ENCODE measurements at regions of chr19 and their contacts with region 1.

Region 1: GRCh38 chr19:15629003-15629880 is 11.5 kb upstream of the CYP4F3 start:
- DNase-seq: peak; percentile 93
- ATAC-seq: peak; percentile 95
- H3K4me3 Mint-ChIP-seq: no peak overlapping the region
- H3K27ac Mint-ChIP-seq: no peak overlapping the region
- H3K4me1 Mint-ChIP-seq: peaks cover 3% of the 10 kb centered on the region
- H3K27me3 Mint-ChIP-seq: peaks cover 4% of the 10 kb centered on the region

Region 2: DNA sequence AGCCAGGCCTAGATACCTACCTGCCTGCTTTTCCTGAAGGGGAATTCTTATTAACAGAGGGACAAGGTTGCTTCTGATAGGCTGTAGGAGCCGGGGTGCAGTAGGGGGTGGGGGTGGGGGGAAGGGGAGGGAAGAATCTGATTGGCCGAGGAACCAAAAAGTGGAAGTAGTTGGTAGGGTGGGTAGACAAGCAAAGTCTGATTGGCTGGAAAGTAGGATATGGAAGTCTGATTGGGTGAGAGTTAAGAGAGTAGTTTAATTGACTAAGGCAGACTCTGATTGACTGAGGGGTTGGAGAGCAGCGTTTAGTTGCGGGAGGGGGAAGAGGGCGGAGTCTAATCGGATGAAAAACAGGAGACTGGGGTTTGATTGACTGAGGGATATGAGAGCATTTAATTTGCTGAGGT is 130.3 kb before region 1 on chr19:
- CTCF ChIA-PET with region 1: no interaction called
- POLR2A ChIA-PET with region 1: no interaction called
- intact Hi-C with region 1: no loop called
- DNase-seq: no peak
- ATAC-seq: peak; percentile 66
- H3K4me3 Mint-ChIP-seq: no peak overlapping the region
- H3K27ac Mint-ChIP-seq: no peak overlapping the region
- H3K4me1 Mint-ChIP-seq: peaks cover 14% of the 10 kb centered on the region
- H3K27me3 Mint-ChIP-seq: no peaks in the 10 kb centered on the region

Region 3: DNA sequence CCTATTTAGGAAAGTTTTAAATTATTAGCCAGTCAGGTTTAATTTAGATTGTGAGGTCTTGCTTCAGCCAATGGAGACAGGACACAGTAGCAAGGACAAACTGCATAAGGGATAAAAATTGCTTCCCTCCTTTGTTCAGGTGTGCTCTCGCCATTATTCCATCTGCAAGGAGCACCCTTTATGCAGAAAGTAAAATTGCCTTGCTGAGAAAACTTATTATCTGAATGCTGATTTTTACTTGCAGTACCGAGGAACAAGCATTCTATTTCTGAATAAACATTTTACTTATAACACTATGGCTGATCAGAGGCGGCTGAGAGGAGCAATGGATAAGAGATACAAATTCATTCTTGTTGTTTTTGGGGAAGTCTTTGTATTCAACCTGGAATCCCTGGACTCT is 112.9 kb before region 1 on chr19:
- CTCF ChIA-PET with region 1: no interaction called
- POLR2A ChIA-PET with region 1: no interaction called
- intact Hi-C with region 1: no loop called
- DNase-seq: no peak
- ATAC-seq: no peak
- H3K4me3 Mint-ChIP-seq: no peak overlapping the region
- H3K27ac Mint-ChIP-seq: peak overlapping the region; percentile 55
- H3K4me1 Mint-ChIP-seq: peaks cover 18% of the 10 kb centered on the region
- H3K27me3 Mint-ChIP-seq: no peaks in the 10 kb centered on the region

Region 4: DNA sequence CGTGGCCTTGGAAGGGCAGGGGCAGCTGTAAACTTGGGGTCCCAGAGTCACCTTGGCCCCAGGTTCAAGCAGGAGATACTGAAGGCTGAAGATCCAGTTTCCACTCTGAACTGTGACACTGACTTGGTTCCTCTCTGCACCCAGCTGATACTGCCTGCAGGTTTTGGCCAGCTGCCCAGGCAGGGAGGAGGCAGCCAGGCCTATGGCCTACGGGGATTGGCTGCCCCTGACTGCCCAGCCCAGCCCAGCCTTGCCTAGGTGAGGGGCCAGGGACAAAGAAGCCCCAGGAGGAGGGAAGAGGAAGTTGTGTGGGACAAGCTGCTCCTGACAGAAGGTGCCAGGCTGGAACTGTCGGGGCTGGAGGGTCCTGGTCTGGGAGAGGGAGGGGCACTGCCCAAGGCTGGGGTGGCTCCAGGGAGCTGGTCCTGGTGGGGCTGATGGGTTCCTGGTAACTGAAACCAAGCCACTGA is 65.9 kb before region 1 on chr19:
- CTCF ChIA-PET with region 1: no interaction called
- POLR2A ChIA-PET with region 1: no interaction called
- intact Hi-C with region 1: no loop called
- DNase-seq: no peak
- ATAC-seq: no peak
- H3K4me3 Mint-ChIP-seq: no peak overlapping the region
- H3K27ac Mint-ChIP-seq: no peak overlapping the region
- H3K4me1 Mint-ChIP-seq: no peaks in the 10 kb centered on the region
- H3K27me3 Mint-ChIP-seq: peaks cover 12% of the 10 kb centered on the region

Region 5: DNA sequence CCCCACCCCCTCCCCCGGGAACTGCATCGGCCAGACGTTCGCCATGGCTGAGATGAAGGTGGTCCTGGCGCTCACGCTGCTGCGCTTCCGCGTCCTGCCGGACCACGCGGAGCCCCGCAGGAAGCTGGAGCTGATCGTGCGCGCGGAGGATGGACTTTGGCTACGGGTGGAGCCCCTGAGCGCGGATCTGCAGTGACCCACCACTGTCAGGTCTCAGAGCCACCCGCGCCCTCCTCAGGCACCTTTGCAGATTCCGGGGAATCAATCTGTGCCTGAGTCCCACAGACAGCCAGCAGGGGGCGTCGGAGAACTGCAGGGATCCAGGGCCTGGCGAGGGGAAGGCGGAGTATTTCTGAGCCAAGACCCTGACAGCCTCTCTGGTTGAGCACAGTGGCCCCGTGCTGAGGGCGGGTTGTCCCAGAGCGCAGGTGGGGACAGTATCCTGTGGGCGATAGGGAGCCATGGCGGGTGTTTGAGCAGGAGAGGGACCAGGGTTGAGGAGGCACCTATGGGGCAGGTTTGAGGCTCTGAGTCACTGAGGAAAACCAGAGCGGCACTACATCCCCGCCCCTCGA is 44.6 kb before region 1 on chr19:
- CTCF ChIA-PET with region 1: no interaction called
- POLR2A ChIA-PET with region 1: no interaction called
- intact Hi-C with region 1: loop called in 1 of 2 experiments (anchors 1 kb)
- DNase-seq: peak; percentile 92
- ATAC-seq: peak; percentile 99
- H3K4me3 Mint-ChIP-seq: peak overlapping the region; percentile 36
- H3K27ac Mint-ChIP-seq: no peak overlapping the region
- H3K4me1 Mint-ChIP-seq: peaks cover 3% of the 10 kb centered on the region
- H3K27me3 Mint-ChIP-seq: peaks cover 16% of the 10 kb centered on the region

Region 6: DNA sequence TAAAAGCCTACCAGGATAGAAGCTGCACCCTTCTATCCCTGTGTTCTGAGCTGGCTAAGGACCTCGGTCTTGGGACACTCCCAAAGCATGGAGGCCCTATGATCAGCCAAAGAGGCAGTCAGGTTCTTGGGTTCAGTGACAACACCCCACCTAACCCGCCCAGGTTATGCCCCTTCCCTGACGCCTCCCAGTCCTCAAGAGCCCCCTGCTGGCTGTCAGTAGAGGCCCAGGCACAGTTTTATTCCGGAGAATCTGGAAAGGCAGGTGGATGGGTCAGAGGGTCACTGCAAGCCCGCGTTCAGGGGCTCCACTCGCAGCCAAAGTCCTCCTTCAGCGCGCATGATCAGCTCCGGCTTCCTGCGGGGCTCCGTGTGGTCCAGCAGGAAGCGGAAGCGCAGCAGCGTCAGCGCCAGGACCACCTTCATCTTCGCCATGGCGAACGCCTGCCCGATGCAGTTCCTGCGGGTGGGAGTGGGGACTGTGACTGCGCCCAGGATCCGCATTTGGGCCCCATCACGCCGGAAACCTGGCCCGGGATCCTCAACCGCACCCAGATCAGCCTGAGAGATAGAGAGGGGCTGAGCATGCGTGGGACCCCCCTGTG is 130.8 kb after region 1 on chr19:
- CTCF ChIA-PET with region 1: no interaction called
- POLR2A ChIA-PET with region 1: no interaction called
- intact Hi-C with region 1: loop called in 1 of 2 experiments (anchors 5 kb)
- DNase-seq: peak; percentile 18
- ATAC-seq: no peak
- H3K4me3 Mint-ChIP-seq: no peak overlapping the region
- H3K27ac Mint-ChIP-seq: no peak overlapping the region
- H3K4me1 Mint-ChIP-seq: no peaks in the 10 kb centered on the region
- H3K27me3 Mint-ChIP-seq: peaks cover 47% of the 10 kb centered on the region

Region 7: GRCh38 chr19:15869109-15869555 is 239.9 kb after region 1 on chr19:
- CTCF ChIA-PET with region 1: interaction called, 4 read pairs
- POLR2A ChIA-PET with region 1: no interaction called
- intact Hi-C with region 1: loop called in 1 of 2 experiments (anchors 1 kb)
- DNase-seq: peak; percentile 50
- ATAC-seq: peak; percentile 74
- H3K4me3 Mint-ChIP-seq: no peak overlapping the region
- H3K27ac Mint-ChIP-seq: no peak overlapping the region
- H3K4me1 Mint-ChIP-seq: peaks cover 3% of the 10 kb centered on the region
- H3K27me3 Mint-ChIP-seq: peaks cover 5% of the 10 kb centered on the region

Region 8: GRCh38 chr19:15954820-15955219 is 325.6 kb after region 1 on chr19:
- CTCF ChIA-PET with region 1: no interaction called
- POLR2A ChIA-PET with region 1: no interaction called
- intact Hi-C with region 1: no loop called
- DNase-seq: no peak
- ATAC-seq: no peak
- H3K4me3 Mint-ChIP-seq: no peak overlapping the region
- H3K27ac Mint-ChIP-seq: no peak overlapping the region
- H3K4me1 Mint-ChIP-seq: no peaks in the 10 kb centered on the region
- H3K27me3 Mint-ChIP-seq: peaks cover 28% of the 10 kb centered on the region